GM10248 (cell line): ENCODE measurements at regions of chr12 and their contacts with region 1.

Region 1: GRCh38 chr12:121015825-121016766 is at the start of gene C12orf43:
- DNase-seq: peak; percentile 97
- CTCF ChIP-seq: no peak

Region 2: GRCh38 chr12:121005346-121005815 is 10.7 kb before region 1 on chr12:
- CTCF ChIA-PET with region 1: interaction called, 12 read pairs
- POLR2A ChIA-PET with region 1: no interaction called
- DNase-seq: peak; percentile 58
- CTCF ChIP-seq: peak; percentile 55